MCF 10A (cell line): ENCODE measurements at regions of chr12 and their contacts with region 1.

Region 1: DNA sequence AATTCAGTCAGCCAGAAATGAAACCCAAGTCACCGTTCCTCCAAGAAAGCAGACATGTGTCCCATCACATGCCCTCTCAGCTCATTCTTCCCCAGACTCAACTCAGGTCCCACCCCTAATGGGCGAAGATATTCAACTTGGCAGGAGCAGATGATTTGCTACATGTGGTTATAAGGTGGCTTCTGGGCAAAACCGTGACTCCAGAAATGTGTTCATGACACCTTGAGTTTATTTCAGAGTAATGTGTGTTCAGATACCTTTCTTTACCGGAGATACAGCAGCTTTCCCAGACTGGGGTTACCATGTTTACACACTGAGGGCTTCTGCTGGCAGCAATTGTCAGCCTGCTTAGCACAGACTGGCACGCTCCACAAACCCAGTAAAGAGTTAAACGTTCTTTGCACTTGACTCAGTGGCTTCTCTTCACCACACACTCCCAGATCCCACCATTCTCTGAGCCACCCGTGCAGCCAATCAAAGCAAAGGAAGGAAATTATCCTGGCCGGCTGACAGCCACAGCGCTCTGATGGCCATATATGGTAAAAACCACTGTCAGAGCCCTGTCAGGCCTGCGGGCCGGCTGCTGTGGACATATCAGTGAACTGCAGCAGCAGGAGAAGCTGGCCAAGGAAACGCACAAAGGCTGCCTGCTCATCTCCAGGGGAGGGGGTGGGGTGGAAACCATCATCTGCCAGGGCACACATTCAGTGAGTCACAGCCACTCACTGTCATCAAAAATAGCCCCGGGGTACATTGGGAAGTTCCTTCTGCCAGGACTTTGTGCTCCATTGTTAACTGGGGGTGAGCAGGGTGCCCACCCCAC is 39.9 kb downstream of the CORO1C start:
- DNase-seq: peak; percentile 100
- H3K4me3 Mint-ChIP-seq: peak overlapping the region; percentile 71
- H3K27ac Mint-ChIP-seq: peak overlapping the region; percentile 98
- H3K4me1 Mint-ChIP-seq: peaks cover 46% of the 10 kb centered on the region
- H3K27me3 Mint-ChIP-seq: no peaks in the 10 kb centered on the region
- CTCF ChIP-seq: peak; percentile 22

Region 2: DNA sequence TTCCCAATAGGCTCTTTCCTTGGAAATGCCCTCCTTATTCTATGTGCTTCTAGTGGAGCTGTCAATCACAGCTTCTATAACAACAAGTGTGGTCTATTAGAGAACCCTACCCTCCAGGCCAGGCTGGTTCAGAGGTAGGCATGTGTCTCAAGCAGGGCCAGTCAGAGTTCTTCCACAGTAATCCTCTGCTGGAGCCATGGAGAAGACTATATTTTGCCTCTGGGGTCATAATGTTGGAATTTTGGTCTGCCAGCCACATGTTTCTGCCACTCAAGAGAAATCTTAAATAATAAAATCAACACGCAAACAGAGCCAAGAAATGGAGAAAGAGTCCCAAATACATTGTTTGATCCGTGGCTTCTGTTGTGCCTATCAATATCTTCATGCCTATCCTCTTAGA is 200.1 kb before region 1 on chr12:
- CTCF ChIA-PET with region 1: no interaction called
- POLR2A ChIA-PET with region 1: no interaction called
- intact Hi-C with region 1: no loop called
- DNase-seq: no peak
- H3K4me3 Mint-ChIP-seq: no peak overlapping the region
- H3K27ac Mint-ChIP-seq: no peak overlapping the region
- H3K4me1 Mint-ChIP-seq: no peaks in the 10 kb centered on the region
- H3K27me3 Mint-ChIP-seq: peaks cover 40% of the 10 kb centered on the region
- CTCF ChIP-seq: no peak

Region 3: GRCh38 chr12:108672054-108672453 is 19.3 kb before region 1 on chr12:
- CTCF ChIA-PET with region 1: interaction called, 73 read pairs
- POLR2A ChIA-PET with region 1: interaction called, 65 read pairs
- intact Hi-C with region 1: no loop called
- DNase-seq: no peak
- H3K4me3 Mint-ChIP-seq: no peak overlapping the region
- H3K27ac Mint-ChIP-seq: no peak overlapping the region
- H3K4me1 Mint-ChIP-seq: peaks cover 9% of the 10 kb centered on the region
- H3K27me3 Mint-ChIP-seq: no peaks in the 10 kb centered on the region
- CTCF ChIP-seq: no peak

Region 4: DNA sequence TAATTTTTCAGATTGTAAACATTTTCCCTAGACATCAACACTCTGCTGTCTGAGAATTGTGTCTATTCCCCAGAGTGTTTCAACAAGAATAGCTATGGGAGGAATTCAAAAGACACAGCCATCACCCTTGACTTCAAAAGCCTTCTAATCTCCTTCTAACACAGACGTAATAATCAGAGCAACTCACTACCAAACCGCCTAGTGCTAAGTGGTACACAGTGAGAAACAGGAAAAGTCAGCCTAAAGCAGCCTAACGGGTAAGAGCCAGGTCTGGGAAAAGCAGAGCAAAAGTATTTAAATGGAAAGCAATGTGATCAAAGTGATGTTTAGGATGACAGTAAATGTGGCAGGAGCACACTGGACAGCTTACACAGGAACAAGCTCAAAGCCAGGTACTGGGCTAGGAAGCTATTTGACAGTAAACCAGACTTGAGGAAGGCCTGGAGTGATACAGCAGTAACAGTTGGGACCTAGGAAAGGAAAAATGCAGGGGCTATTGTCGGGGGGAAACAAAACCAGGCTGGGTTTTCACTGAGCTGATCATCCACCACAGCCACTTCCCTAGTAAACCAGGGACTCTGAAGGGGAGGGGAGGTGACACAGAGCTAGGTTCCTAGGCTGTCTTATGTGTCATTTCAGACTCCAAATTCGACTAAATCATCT is 10.5 kb after region 1 on chr12:
- CTCF ChIA-PET with region 1: interaction called, 4 read pairs
- POLR2A ChIA-PET with region 1: interaction called, 56 read pairs
- intact Hi-C with region 1: no loop called
- DNase-seq: peak; percentile 19
- H3K4me3 Mint-ChIP-seq: peak overlapping the region; percentile 70
- H3K27ac Mint-ChIP-seq: peak overlapping the region; percentile 89
- H3K4me1 Mint-ChIP-seq: peaks cover 31% of the 10 kb centered on the region
- H3K27me3 Mint-ChIP-seq: no peaks in the 10 kb centered on the region
- CTCF ChIP-seq: no peak

Region 5: GRCh38 chr12:108722992-108723766 is 31.8 kb after region 1 on chr12:
- CTCF ChIA-PET with region 1: interaction called, 5 read pairs
- POLR2A ChIA-PET with region 1: interaction called, 151 read pairs
- intact Hi-C with region 1: loop called (anchors 1 kb)
- DNase-seq: peak; percentile 56
- H3K4me3 Mint-ChIP-seq: peak overlapping the region; percentile 10
- H3K27ac Mint-ChIP-seq: peak overlapping the region; percentile 79
- H3K4me1 Mint-ChIP-seq: peaks cover 58% of the 10 kb centered on the region
- H3K27me3 Mint-ChIP-seq: no peaks in the 10 kb centered on the region
- CTCF ChIP-seq: no peak

Region 6: DNA sequence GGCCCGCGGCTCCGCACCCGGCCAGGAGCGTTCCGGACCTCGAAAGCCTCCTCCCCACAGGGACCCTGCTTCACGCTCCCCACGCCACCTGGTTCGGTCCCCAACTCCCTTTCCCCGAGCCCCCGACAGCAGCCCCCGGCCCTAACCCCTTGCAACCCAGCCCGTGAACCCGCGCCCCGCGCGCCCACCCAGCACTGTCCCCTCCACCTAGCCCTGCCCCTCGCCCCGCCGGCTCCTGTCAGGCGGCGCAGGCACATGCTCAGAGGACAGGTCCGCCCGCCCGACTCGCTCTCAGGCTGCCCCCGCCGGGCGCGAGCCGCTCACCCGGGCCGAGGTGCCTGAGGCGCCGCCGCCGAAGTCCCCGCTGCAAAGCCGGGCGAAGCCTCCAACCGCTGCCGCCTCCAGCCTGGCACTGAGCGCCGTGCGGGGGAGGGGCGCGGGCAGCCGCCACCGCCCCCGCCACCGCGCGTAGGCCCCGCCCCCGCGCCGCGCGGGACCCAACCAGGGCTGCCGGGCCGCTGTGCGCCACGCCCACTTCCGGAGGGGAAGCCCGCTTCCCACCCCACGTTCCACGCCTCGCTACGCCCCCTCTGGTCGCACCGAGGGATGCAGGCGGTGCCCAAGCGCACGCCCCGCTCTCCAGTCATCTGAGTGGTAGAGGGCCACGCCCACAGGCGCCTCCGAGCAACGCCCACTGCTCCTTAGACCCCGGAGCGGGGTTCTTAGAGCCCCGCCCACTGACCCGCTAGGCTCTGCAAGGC is 39.9 kb after region 1 on chr12 and contains the start of gene CORO1C:
- CTCF ChIA-PET with region 1: interaction called, 5 read pairs
- POLR2A ChIA-PET with region 1: interaction called, 179 read pairs
- intact Hi-C with region 1: loop called (anchors 1 kb)
- DNase-seq: peak; percentile 96
- H3K4me3 Mint-ChIP-seq: peak within 1 kb of the TSS; percentile 90
- H3K27ac Mint-ChIP-seq: peak within 1 kb of the TSS; percentile 87
- H3K4me1 Mint-ChIP-seq: peaks cover 42% of the 10 kb centered on the region
- H3K27me3 Mint-ChIP-seq: no peaks in the 10 kb centered on the region
- CTCF ChIP-seq: peak; percentile 68
- total RNA-seq, gene CORO1C: 130 and 141 TPM in 2 replicates